ENCODE measurements at regions of chr14 and their contacts with region 1.

Region 1: GRCh38 chr14:58297762-58298476 is 436 bp upstream of the ARID4A start:
- DNase-seq: peak; percentile 98
- H3K4me3 Mint-ChIP-seq: no peak overlapping the region
- H3K27ac Mint-ChIP-seq: no peak overlapping the region
- H3K4me1 Mint-ChIP-seq: peaks cover 47% of the 10 kb centered on the region
- H3K27me3 Mint-ChIP-seq: no peaks in the 10 kb centered on the region

Region 2: GRCh38 chr14:58244556-58245387 is 53.1 kb before region 1 on chr14 and contains the start of gene PSMA3:
- CTCF ChIA-PET with region 1: interaction called, 6 read pairs
- POLR2A ChIA-PET with region 1: interaction called, 105 read pairs
- DNase-seq: peak; percentile 98
- H3K4me3 Mint-ChIP-seq: peak within 1 kb of the TSS; percentile 88
- H3K27ac Mint-ChIP-seq: peak within 1 kb of the TSS; percentile 96
- H3K4me1 Mint-ChIP-seq: peaks cover 49% of the 10 kb centered on the region
- H3K27me3 Mint-ChIP-seq: no peaks in the 10 kb centered on the region
- total RNA-seq, gene PSMA3: 243 to 259 TPM

Region 3: DNA sequence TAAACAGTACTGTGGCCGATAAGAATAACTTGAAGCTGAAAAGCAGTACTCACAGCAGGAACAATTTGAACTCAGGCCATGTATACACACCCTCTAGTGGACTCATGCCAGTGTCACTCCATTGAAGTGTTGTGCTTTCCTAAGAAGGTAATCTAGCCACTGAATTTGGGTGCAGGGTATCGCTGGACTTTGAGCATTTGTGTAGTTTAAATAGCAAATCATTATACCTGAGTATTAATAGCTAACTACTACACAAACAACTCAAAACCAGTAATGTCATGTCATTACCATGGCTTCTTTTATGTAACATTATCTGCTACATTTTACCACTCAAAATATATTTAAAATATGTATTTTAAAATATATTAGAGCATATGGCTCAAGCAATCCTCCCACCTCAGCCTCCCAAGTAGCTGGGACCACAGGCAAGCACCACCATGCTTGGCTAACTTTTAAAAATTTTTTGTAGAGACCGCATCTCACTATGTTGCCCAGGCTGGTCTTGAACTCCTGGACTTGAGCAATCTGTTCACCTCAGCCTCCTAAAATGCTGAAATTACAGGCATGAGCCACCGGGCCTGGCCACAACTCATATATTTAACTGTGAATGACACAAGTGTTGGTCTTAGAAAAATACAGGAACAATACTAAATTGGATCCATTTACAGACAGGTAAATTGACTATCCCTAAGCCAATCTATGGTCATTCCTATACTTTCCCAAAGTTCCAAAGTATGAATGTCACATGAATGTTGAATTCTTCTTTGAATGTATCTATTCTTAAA is 25.1 kb before region 1 on chr14:
- CTCF ChIA-PET with region 1: interaction called, 5 read pairs
- POLR2A ChIA-PET with region 1: interaction called, 59 read pairs
- DNase-seq: no peak
- H3K4me3 Mint-ChIP-seq: no peak overlapping the region
- H3K27ac Mint-ChIP-seq: no peak overlapping the region
- H3K4me1 Mint-ChIP-seq: peaks cover 31% of the 10 kb centered on the region
- H3K27me3 Mint-ChIP-seq: no peaks in the 10 kb centered on the region

Region 4: DNA sequence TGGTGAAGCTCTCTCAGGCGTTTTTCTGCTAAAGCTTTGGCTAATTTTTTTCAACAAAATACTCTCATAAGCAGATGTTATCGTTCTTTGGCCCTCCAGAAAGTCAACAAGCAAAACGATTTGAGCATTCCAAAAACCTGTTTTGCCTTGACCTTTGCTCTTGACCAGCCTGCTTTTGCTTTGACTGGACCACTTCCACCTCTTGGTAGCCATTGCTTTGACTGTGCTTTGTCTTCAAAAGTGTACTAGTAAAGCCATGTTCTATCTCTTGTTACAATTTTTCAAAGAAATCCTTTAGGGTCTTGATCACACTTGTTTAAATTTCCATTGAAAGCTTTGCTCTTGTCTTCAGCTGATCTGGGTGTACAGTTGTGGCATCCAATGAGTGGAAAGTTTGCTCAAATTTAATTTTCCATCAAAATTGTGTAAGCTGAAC is 10.3 kb before region 1 on chr14:
- CTCF ChIA-PET with region 1: interaction called, 6 read pairs
- POLR2A ChIA-PET with region 1: interaction called, 16 read pairs
- DNase-seq: no peak
- H3K4me3 Mint-ChIP-seq: no peak overlapping the region
- H3K27ac Mint-ChIP-seq: no peak overlapping the region
- H3K4me1 Mint-ChIP-seq: peaks cover 51% of the 10 kb centered on the region
- H3K27me3 Mint-ChIP-seq: no peaks in the 10 kb centered on the region

Region 5: DNA sequence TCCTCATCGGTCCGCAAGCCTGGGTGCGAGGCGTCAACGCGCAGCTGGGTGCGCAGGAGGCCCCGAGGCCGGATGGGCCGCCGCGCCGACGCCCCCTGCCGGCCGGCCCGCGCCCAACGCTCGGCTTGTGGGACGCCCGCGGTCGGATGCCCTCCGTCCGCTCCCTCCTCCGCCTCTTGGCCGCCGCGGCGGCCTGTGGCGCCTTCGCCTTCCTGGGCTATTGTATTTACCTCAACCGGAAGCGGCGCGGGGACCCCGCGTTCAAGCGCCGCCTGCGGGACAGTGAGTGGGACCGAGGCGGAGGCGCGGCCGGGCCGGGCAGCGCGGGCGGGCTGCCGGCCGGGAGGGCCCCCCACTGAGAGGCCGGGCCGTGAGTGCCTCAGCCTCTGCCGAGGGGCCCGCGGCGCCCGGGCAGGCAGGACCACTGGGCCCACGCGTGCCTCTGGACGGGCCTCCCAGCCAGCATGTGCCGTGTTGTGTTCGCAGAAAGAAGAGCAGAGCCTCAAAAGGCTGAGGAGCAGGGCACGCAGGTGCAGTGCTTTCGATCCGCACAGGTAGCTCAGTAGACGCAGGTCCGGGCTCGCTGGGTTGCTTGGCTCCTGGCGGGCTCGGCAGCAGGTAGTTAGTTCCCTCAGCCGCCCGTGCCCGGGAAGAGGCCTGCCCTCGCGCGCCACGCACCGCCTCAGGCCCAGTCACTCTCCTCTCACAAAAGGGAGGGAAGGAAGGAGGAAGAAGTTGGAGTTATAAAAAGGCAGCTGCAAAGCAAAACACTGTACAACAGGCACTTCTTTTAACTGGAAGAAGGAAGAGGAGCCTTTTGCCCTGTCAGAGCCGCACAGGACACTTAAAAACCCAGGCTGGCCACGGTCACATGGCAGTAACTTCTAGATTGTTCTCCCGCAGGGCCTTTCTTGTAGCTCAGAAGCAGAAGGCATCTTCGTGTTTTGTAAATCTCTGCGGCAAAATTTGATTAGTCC is 98.2 kb after region 1 on chr14 and contains the start of gene TOMM20L:
- CTCF ChIA-PET with region 1: interaction called, 16 read pairs
- POLR2A ChIA-PET with region 1: interaction called, 10 read pairs
- DNase-seq: peak; percentile 76
- H3K4me3 Mint-ChIP-seq: peak within 1 kb of the TSS; percentile 67
- H3K27ac Mint-ChIP-seq: peak within 1 kb of the TSS; percentile 32
- H3K4me1 Mint-ChIP-seq: peaks cover 13% of the 10 kb centered on the region
- H3K27me3 Mint-ChIP-seq: no peaks in the 10 kb centered on the region
- total RNA-seq, gene TOMM20L: not detected

Region 6: GRCh38 chr14:58444627-58445026 is 146.7 kb after region 1 on chr14:
- CTCF ChIA-PET with region 1: no interaction called
- POLR2A ChIA-PET with region 1: no interaction called
- DNase-seq: no peak
- H3K4me3 Mint-ChIP-seq: no peak overlapping the region
- H3K27ac Mint-ChIP-seq: no peak overlapping the region
- H3K4me1 Mint-ChIP-seq: no peaks in the 10 kb centered on the region
- H3K27me3 Mint-ChIP-seq: no peaks in the 10 kb centered on the region

Measured in activated CD4-positive, alpha-beta memory T cell treated with anti-CD3 and anti-CD28 coated beads, Interleukin-2, amount 10 ng/mL, durations not matched to agents 7 days and 5 days (primary cell).